K562 (cell line): ENCODE measurements at regions of chr15 and their contacts with region 1.

Region 1: GRCh38 chr15:92091155-92091734 is 237.7 kb downstream of the SLCO3A1 start:
- DNase-seq: peak; percentile 46 to 64 (median 62)
- ATAC-seq: peak; percentile 94
- H3K4me3 ChIP-seq: no peak overlapping the region
- H3K27ac ChIP-seq: no peak overlapping the region
- H3K4me1 ChIP-seq: no peaks in the 10 kb centered on the region
- H3K27me3 ChIP-seq: no peaks in the 10 kb centered on the region; a peak in 1 of 5 replicates
- CTCF ChIP-seq: peak; percentile 69 to 80 (median 71)
- EP300 ChIP-seq: no peak
- POLR2A ChIP-seq: no peak
- RAD21 ChIP-seq: peak; percentile 38 to 69; a peak in 3 of 4 replicates

Region 2: GRCh38 chr15:91849749-91850161 is 241.5 kb before region 1 on chr15:
- CTCF ChIA-PET with region 1: no interaction called
- POLR2A ChIA-PET with region 1: no interaction called
- in situ Hi-C with region 1: no loop called
- intact Hi-C with region 1: no loop called
- DNase-seq: peak in 3 of 4 experiments; percentile 10 to 23 (median 18)
- ATAC-seq: no peak
- H3K4me3 ChIP-seq: no peak overlapping the region
- H3K27ac ChIP-seq: no peak overlapping the region
- H3K4me1 ChIP-seq: peaks cover 0 to 17% of the 10 kb centered on the region in 2 experiments; a peak in 2 of 5 replicates
- H3K27me3 ChIP-seq: peaks cover 0 to 5% of the 10 kb centered on the region in 2 experiments; a peak in 3 of 5 replicates
- CTCF ChIP-seq: peak in 2 of 3 experiments; percentile 24 to 44; a peak in 3 of 6 replicates
- EP300 ChIP-seq: no peak
- POLR2A ChIP-seq: no peak
- RAD21 ChIP-seq: no peak

Region 3: GRCh38 chr15:92011611-92012367 is 79.5 kb before region 1 on chr15:
- CTCF ChIA-PET with region 1: no interaction called
- POLR2A ChIA-PET with region 1: no interaction called
- in situ Hi-C with region 1: no loop called
- intact Hi-C with region 1: no loop called
- DNase-seq: no peak
- ATAC-seq: no peak
- H3K4me3 ChIP-seq: no peak overlapping the region
- H3K27ac ChIP-seq: no peak overlapping the region
- H3K4me1 ChIP-seq: no peaks in the 10 kb centered on the region
- H3K27me3 ChIP-seq: peaks cover 2 to 20% of the 10 kb centered on the region in 2 experiments; a peak in 2 of 5 replicates
- CTCF ChIP-seq: no peak
- EP300 ChIP-seq: no peak
- POLR2A ChIP-seq: no peak
- RAD21 ChIP-seq: no peak

Region 4: DNA sequence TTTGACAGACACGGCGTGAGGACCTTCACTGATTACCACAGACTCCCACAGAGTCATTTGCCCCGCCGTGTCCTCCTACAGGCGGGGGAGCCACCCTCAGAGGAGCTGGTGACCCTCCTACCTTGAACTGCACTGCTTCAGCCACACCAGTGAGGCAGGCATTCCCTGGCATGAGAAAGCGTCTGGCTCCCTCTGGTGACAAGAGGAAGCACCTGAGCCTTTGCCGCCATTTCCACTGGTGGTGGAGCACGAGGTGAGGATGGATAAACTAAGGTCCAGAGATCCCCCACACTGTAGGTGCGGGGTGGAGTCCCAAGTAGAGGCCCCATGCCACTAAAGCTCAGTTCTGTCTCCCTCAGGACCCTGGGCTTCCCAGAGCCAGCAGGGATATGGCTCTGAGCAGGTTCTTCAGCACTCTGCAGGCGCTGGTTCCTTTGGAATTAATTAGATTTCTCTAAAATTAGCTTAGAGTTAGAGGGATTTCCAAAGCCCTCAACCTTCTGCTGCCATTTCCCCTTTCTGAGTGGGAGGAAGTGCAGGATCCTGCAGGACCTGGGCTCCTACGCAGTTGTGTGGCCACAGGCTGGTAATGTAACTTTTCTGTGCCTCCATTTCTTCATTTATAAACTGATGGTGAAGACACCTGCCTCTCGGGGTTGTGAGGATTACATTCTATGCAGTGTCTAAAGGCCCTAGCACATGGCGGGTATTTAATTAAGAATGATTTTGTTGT is 13.7 kb before region 1 on chr15:
- CTCF ChIA-PET with region 1: no interaction called
- POLR2A ChIA-PET with region 1: no interaction called
- in situ Hi-C with region 1: no loop called
- intact Hi-C with region 1: no loop called
- DNase-seq: peak; percentile 55 to 59 (median 57)
- ATAC-seq: peak; percentile 88
- H3K4me3 ChIP-seq: no peak overlapping the region
- H3K27ac ChIP-seq: no peak overlapping the region
- H3K4me1 ChIP-seq: no peaks in the 10 kb centered on the region
- H3K27me3 ChIP-seq: peaks cover 0 to 36% of the 10 kb centered on the region in 2 experiments; a peak in 3 of 5 replicates
- CTCF ChIP-seq: peak; percentile 78 to 80 (median 79)
- EP300 ChIP-seq: no peak
- POLR2A ChIP-seq: no peak
- RAD21 ChIP-seq: peak; percentile 81 to 85

Region 5: GRCh38 chr15:92709110-92709790 is 618.0 kb after region 1 on chr15:
- CTCF ChIA-PET with region 1: no interaction called
- POLR2A ChIA-PET with region 1: no interaction called
- in situ Hi-C with region 1: loop called (anchors 5 kb)
- intact Hi-C with region 1: loop called (anchors 2 kb)
- DNase-seq: no peak
- ATAC-seq: no peak
- H3K4me3 ChIP-seq: no peak overlapping the region
- H3K27ac ChIP-seq: no peak overlapping the region
- H3K4me1 ChIP-seq: peaks cover 0 to 10% of the 10 kb centered on the region in 2 experiments; a peak in 1 of 5 replicates
- H3K27me3 ChIP-seq: peaks cover 12 to 46% of the 10 kb centered on the region in 2 experiments; a peak in 4 of 5 replicates
- CTCF ChIP-seq: no peak
- EP300 ChIP-seq: no peak
- POLR2A ChIP-seq: no peak
- RAD21 ChIP-seq: no peak